ENCODE measurements at regions of chr3 and their contacts with region 1.

Region 1: GRCh38 chr3:149203758-149204157 is 17.9 kb downstream of the CP start:
- DNase-seq: no peak
- ATAC-seq: no peak
- H3K4me3 ChIP-seq: no peak overlapping the region
- H3K27ac ChIP-seq: no peak overlapping the region
- H3K4me1 ChIP-seq: no peaks in the 10 kb centered on the region
- H3K27me3 ChIP-seq: no peaks in the 10 kb centered on the region

Region 2: GRCh38 chr3:149152420-149152819 is 51.3 kb before region 1 on chr3:
- intact Hi-C with region 1: loop called in 1 of 2 experiments (anchors 10 kb)
- DNase-seq: no peak
- ATAC-seq: no peak
- H3K4me3 ChIP-seq: no peak overlapping the region
- H3K27ac ChIP-seq: no peak overlapping the region
- H3K4me1 ChIP-seq: no peaks in the 10 kb centered on the region
- H3K27me3 ChIP-seq: no peaks in the 10 kb centered on the region

Region 3: DNA sequence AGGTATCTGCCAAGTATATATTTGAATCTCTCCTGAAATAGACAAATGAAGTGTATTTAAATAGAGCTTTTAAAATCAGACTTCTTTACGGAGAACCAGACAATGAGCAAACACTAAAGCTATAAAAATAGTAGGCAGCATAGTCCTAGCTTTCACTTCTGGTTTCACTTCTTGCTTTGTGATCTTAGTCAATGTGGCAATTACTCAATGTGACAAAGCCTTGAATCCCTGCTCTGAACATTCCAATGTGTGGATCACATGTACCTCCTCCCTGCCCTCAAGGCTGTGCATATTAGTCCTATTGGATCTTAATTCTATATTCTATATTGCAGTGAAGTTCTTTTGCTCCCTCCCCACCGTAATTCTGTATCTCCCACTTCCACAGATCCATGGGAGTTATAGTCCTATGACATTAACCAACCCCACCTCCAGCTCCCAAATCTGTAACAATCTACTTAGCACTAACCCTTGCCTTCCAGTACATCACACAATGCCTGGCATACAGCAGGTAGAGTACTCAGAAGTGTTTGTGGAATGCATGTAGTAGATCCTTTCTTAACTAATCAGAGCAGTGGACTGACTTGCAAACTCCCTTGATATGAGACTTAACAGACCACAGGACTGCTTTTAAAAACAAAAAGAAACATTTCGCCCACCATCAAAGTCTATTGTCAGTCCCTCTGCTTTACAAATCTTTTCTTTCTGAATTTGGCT is 42.1 kb after region 1 on chr3:
- intact Hi-C with region 1: loop called in 1 of 2 experiments (anchors 10 kb)
- DNase-seq: no peak
- ATAC-seq: peak; percentile 34
- H3K4me3 ChIP-seq: no peak overlapping the region
- H3K27ac ChIP-seq: peak overlapping the region; percentile 22 to 88
- H3K4me1 ChIP-seq: peaks cover 4 to 5% of the 10 kb centered on the region in 2 donors
- H3K27me3 ChIP-seq: no peaks in the 10 kb centered on the region

Measured in aorta (tissue), 5 donors.